Mammary epithelial cell (primary cell): ENCODE measurements at regions of chr13 and their contacts with region 1.

Region 1: DNA sequence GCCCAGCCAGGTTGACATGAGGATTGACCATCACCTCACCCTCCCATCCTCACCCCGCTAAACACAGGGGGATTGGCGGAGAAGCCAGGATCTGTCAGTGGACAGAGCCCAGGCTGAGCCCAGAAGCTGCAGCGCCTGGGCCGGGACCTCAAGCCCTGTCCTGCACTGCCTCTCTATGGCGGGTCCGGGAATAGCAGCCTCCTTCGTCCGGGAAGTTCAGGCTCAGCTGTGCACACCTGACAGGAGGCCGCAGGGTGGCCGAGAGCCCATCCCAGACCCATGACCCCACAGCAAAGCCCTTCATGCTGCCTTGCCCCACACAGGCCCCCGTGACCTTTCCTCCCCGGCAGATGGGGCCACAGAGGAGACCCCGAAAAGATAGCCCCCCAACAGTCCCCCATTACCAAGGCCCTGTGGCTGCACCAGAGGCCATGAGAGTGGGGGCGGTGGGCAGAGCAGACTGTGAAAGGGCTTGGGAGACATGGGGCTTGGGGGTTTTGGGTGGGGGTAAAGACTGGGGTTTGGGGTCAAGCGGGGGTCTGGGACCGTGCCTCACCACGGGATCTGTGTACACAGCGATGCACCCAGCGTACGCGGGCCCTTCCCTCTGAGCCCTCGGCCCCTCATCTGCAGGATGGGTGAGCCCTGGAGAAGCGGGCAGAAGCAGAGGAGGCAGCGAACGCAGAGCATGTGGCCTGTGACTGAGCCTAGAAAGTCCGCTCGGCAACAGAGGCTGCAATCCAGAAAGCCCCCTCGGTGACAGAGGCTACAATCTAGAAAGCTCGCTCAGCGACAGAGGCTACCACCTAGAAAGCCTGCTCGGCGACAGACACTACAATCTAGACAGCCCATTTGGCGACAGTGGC is 68.1 kb downstream of the SPACA7 start:
- DNase-seq: peak; percentile 27
- H3K4me3 ChIP-seq: no peak overlapping the region
- H3K27ac ChIP-seq: no peak overlapping the region
- H3K4me1 ChIP-seq: no peaks in the 10 kb centered on the region
- H3K27me3 ChIP-seq: peaks cover 2% of the 10 kb centered on the region
- CTCF ChIP-seq: peak; percentile 84 to 89

Region 2: GRCh38 chr13:111066544-111066943 is 1377.7 kb before region 1 on chr13:
- CTCF ChIA-PET with region 1: no interaction called
- dilution Hi-C with region 1: no loop called
- in situ Hi-C with region 1: no loop called
- intact Hi-C with region 1: loop called (anchors 5 kb)
- DNase-seq: no peak
- H3K4me3 ChIP-seq: no peak overlapping the region
- H3K27ac ChIP-seq: no peak overlapping the region
- H3K4me1 ChIP-seq: peaks cover 6% of the 10 kb centered on the region
- H3K27me3 ChIP-seq: no peaks in the 10 kb centered on the region
- CTCF ChIP-seq: no peak

Region 3: DNA sequence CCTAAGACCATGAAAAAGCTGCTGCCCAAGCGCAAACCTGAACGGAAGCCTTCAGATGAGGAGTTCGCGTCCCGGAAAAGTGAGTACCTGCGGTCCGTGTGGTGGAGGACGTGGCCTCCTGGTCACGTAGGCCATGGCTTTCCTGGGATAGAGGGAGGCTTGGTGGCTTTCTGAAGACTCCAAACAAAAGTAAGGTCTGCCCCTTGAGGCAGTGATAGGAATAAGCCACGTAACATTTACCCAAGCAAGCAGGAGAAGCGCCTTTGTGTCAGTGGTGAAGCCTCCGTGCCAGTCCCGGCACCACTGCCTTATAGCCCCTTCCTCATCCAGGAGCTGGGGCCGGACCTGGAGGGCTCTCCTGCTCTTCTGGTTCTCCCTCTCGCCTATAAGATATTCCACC is 1158.1 kb before region 1 on chr13:
- CTCF ChIA-PET with region 1: no interaction called
- dilution Hi-C with region 1: no loop called
- in situ Hi-C with region 1: no loop called
- intact Hi-C with region 1: loop called (anchors 5 kb)
- DNase-seq: no peak
- H3K4me3 ChIP-seq: no peak overlapping the region
- H3K27ac ChIP-seq: no peak overlapping the region
- H3K4me1 ChIP-seq: no peaks in the 10 kb centered on the region
- H3K27me3 ChIP-seq: no peaks in the 10 kb centered on the region
- CTCF ChIP-seq: no peak

Region 4: GRCh38 chr13:111474136-111475002 is 969.9 kb before region 1 on chr13:
- CTCF ChIA-PET with region 1: interaction called, 8 read pairs
- dilution Hi-C with region 1: no loop called
- in situ Hi-C with region 1: loop called in 1 of 2 experiments (anchors 10 kb)
- intact Hi-C with region 1: loop called (anchors 1 kb)
- DNase-seq: peak; percentile 19
- H3K4me3 ChIP-seq: no peak overlapping the region
- H3K27ac ChIP-seq: no peak overlapping the region
- H3K4me1 ChIP-seq: no peaks in the 10 kb centered on the region
- H3K27me3 ChIP-seq: no peaks in the 10 kb centered on the region
- CTCF ChIP-seq: peak; percentile 23 to 47

Region 5: DNA sequence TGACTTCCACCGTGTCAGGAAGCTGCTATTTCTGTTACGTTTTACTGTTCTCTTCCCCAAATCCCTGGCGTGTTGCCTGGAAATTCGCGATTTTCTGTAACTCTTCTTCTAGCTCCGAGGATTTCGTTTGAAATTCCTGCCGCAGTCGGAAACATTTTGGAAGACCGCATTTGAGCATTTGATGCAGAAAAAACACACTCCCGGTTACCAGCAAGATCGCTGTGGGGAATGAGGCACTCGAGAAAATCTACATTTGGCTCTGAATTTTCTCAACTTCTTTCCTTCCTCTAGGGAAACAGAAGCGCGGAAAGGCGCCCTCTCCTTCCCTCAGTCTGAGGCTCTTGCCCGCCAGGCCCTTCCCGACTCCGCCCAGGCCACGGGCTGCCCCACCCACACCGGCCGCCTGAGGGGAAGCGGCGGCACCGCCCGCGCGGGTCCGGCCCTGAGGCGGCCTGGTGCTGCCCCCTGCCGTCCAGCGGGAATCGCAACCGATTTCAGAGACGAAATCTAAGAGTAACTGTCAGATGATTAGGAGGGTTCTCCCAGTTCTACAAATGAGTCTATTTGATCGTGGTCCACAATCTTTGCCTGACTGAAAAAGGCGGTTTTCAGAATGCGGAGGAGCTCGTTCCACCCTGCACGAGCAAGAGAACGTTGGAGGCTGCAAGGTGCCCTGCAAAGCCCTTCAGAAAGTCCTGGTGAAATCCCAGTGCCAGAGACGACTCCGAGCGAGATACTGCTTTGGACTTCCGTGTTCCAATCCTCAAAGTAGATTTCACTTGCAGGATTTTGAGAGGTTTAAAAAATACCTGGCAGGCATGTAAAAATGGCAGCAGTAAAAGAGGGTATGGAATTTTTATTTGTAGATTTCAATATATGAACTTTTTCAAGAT is 162.1 kb after region 1 on chr13:
- CTCF ChIA-PET with region 1: no interaction called
- dilution Hi-C with region 1: no loop called
- in situ Hi-C with region 1: no loop called
- intact Hi-C with region 1: loop called (anchors 1 kb)
- DNase-seq: peak; percentile 80
- H3K4me3 ChIP-seq: peak overlapping the region; percentile 52 to 70 (median 55)
- H3K27ac ChIP-seq: no peak overlapping the region
- H3K4me1 ChIP-seq: peaks cover 4% of the 10 kb centered on the region
- H3K27me3 ChIP-seq: no peaks in the 10 kb centered on the region
- CTCF ChIP-seq: peak; percentile 69 to 88